ENCODE measurements at regions of chr3 and their contacts with region 1.

Region 1: DNA sequence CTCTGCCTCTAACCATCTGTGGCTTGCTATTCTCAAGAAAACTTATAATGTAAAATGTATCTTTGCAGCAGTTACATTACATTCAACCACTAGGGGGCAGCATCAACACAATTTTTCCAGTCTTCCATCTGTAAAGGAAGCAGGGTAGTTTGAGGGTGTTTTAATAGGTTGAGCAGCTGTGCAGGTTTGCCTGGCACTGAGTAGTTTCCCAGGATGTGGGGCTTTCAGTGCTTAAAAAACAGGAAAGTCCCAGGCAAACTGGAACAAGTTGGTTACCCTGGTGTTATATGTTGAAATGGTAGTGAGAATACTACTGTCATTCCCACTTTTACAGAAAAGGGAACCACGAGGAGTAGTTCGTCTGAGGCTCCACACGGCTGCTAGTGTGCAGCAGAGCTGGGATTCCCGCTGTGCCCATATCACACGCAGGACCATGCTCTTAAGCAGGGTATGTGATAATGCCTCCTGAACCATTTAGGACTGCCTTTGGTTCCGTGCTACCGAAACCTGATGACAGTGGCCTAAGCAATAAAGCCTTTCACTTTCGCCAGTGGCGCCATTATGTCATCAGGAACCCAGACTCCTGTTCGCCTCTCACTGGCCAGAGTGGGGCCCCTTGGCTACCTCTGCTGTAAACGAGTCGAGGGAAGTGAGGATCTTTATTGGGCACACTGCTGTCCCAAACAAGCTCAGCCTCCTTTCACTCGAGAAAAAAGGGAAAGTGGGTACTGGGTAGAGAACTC is 64.7 kb upstream of the ZBTB38 start:
- DNase-seq: peak; percentile 70
- ATAC-seq: peak; percentile 48
- H3K4me3 Mint-ChIP-seq: no peak overlapping the region
- H3K27ac Mint-ChIP-seq: no peak overlapping the region
- H3K4me1 Mint-ChIP-seq: peaks cover 51% of the 10 kb centered on the region
- H3K27me3 Mint-ChIP-seq: no peaks in the 10 kb centered on the region

Region 2: GRCh38 chr3:141237701-141238521 is 65.7 kb before region 1 on chr3:
- CTCF ChIA-PET with region 1: interaction called, 16 read pairs
- POLR2A ChIA-PET with region 1: interaction called, 3 read pairs
- intact Hi-C with region 1: no loop called
- DNase-seq: peak; percentile 61
- ATAC-seq: peak; percentile 92
- H3K4me3 Mint-ChIP-seq: peak overlapping the region; percentile 36
- H3K27ac Mint-ChIP-seq: peak overlapping the region; percentile 88
- H3K4me1 Mint-ChIP-seq: peaks cover 83% of the 10 kb centered on the region
- H3K27me3 Mint-ChIP-seq: no peaks in the 10 kb centered on the region

Region 3: GRCh38 chr3:141286856-141287255 is 16.8 kb before region 1 on chr3:
- CTCF ChIA-PET with region 1: interaction called, 39 read pairs
- POLR2A ChIA-PET with region 1: no interaction called
- intact Hi-C with region 1: no loop called
- DNase-seq: no peak
- ATAC-seq: no peak
- H3K4me3 Mint-ChIP-seq: no peak overlapping the region
- H3K27ac Mint-ChIP-seq: no peak overlapping the region
- H3K4me1 Mint-ChIP-seq: no peaks in the 10 kb centered on the region
- H3K27me3 Mint-ChIP-seq: no peaks in the 10 kb centered on the region

Measured in activated CD4-positive, alpha-beta T cell treated with anti-CD3 and anti-CD28 coated beads for 36 hours (primary cell).